A673 (cell line): ENCODE measurements at regions of chr2 and their contacts with region 1.

Region 1: GRCh38 chr2:58448065-58448507 is 207.0 kb upstream of the FANCL start:
- DNase-seq: peak; percentile 87
- H3K4me3 ChIP-seq: no peak overlapping the region
- H3K27ac ChIP-seq: no peak overlapping the region
- H3K4me1 ChIP-seq: no peaks in the 10 kb centered on the region
- H3K27me3 ChIP-seq: no peaks in the 10 kb centered on the region
- CTCF ChIP-seq: peak; percentile 77

Region 2: GRCh38 chr2:57720728-57721627 is 727.1 kb before region 1 on chr2:
- CTCF ChIA-PET with region 1: no interaction called
- POLR2A ChIA-PET with region 1: no interaction called
- intact Hi-C with region 1: loop called (anchors 5 kb)
- DNase-seq: peak; percentile 80
- H3K4me3 ChIP-seq: peak overlapping the region; percentile 21
- H3K27ac ChIP-seq: no peak overlapping the region
- H3K4me1 ChIP-seq: no peaks in the 10 kb centered on the region
- H3K27me3 ChIP-seq: no peaks in the 10 kb centered on the region
- CTCF ChIP-seq: peak; percentile 86

Region 3: GRCh38 chr2:57759822-57760300 is 688.2 kb before region 1 on chr2:
- CTCF ChIA-PET with region 1: interaction called, 11 read pairs
- POLR2A ChIA-PET with region 1: no interaction called
- intact Hi-C with region 1: loop called (anchors 1 kb)
- DNase-seq: peak; percentile 85
- H3K4me3 ChIP-seq: peak overlapping the region; percentile 27
- H3K27ac ChIP-seq: no peak overlapping the region
- H3K4me1 ChIP-seq: peaks cover 13% of the 10 kb centered on the region
- H3K27me3 ChIP-seq: no peaks in the 10 kb centered on the region
- CTCF ChIP-seq: peak; percentile 94

Region 4: GRCh38 chr2:57906152-57906732 is 541.8 kb before region 1 on chr2:
- CTCF ChIA-PET with region 1: interaction called, 10 read pairs
- POLR2A ChIA-PET with region 1: no interaction called
- intact Hi-C with region 1: loop called (anchors 1 kb)
- DNase-seq: peak; percentile 68
- H3K4me3 ChIP-seq: no peak overlapping the region
- H3K27ac ChIP-seq: no peak overlapping the region
- H3K4me1 ChIP-seq: no peaks in the 10 kb centered on the region
- H3K27me3 ChIP-seq: no peaks in the 10 kb centered on the region
- CTCF ChIP-seq: peak; percentile 80

Region 5: DNA sequence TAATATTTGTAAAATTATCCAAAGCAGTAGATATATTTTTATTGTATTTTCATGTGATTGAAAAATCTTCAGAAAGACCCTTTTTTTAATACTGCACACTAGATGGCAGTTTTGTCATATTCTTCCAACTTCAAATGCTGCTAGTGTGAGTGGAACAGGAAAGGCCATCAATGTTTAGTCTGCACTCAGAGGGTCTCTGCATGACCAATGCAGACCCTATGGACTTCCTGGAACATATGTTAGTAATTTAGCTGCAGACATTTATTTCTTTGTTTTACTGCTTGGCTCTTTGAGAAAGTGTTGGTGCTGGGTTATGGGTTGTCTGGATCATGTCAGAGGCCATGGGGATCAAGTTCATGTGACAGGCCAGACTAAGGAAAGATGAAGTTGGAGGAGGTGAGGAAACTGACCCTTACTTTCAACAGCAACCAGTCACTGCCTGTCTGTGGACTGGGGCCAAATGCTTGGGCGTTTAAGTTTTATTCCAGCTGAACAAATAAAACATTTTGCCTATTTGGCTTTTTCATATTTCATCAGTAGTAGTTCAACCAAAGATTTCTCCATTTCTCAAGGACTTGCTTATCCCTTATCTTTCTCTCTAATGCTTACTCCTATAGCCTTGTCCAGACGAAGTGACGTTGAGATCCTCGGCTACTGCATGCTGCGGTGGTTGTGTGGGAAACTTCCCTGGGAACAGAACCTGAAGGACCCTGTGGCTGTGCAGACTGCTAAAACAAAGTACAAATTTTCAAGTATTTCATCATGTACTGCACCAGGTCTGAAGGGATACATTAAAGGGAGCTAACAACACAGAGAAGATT is 316.7 kb before region 1 on chr2:
- CTCF ChIA-PET with region 1: no interaction called
- POLR2A ChIA-PET with region 1: no interaction called
- intact Hi-C with region 1: loop called (anchors 5 kb)
- DNase-seq: peak; percentile 23
- H3K4me3 ChIP-seq: no peak overlapping the region
- H3K27ac ChIP-seq: no peak overlapping the region
- H3K4me1 ChIP-seq: no peaks in the 10 kb centered on the region
- H3K27me3 ChIP-seq: no peaks in the 10 kb centered on the region
- CTCF ChIP-seq: peak; percentile 52

Region 6: GRCh38 chr2:58571181-58571852 is 123.2 kb after region 1 on chr2:
- CTCF ChIA-PET with region 1: no interaction called
- POLR2A ChIA-PET with region 1: no interaction called
- intact Hi-C with region 1: loop called (anchors 5 kb)
- DNase-seq: peak; percentile 78
- H3K4me3 ChIP-seq: no peak overlapping the region
- H3K27ac ChIP-seq: no peak overlapping the region
- H3K4me1 ChIP-seq: peaks cover 7% of the 10 kb centered on the region
- H3K27me3 ChIP-seq: no peaks in the 10 kb centered on the region
- CTCF ChIP-seq: peak; percentile 76

Region 7: DNA sequence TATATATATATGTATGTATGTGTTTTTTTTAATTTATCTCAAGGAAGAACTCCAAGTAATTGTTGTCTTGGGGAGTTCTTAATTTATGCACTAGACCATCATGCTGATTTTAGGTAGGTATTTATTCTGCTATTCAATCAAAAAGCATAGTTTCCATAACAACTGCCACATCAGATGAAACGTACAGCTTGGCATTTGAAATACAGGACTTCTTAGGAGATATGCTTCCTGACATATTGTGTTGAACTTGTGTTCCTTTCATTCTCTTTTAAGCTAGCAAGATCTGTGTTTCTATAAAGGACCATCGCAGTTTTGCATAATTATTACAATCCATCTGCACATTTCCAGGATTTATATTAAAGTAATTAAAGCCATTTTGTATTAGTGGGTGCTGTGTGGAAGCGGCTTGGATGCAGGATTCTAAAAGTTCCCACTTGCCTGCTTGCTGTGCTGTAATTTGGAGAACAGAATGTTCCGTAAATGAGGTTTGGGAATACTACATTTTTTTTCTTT is 136.6 kb after region 1 on chr2:
- CTCF ChIA-PET with region 1: no interaction called
- POLR2A ChIA-PET with region 1: no interaction called
- intact Hi-C with region 1: no loop called
- DNase-seq: no peak
- H3K4me3 ChIP-seq: no peak overlapping the region
- H3K27ac ChIP-seq: no peak overlapping the region
- H3K4me1 ChIP-seq: no peaks in the 10 kb centered on the region
- H3K27me3 ChIP-seq: no peaks in the 10 kb centered on the region
- CTCF ChIP-seq: no peak

Region 8: GRCh38 chr2:58680755-58681310 is 232.7 kb after region 1 on chr2:
- CTCF ChIA-PET with region 1: interaction called, 6 read pairs
- POLR2A ChIA-PET with region 1: no interaction called
- intact Hi-C with region 1: loop called (anchors 5 kb)
- DNase-seq: peak; percentile 4
- H3K4me3 ChIP-seq: no peak overlapping the region
- H3K27ac ChIP-seq: no peak overlapping the region
- H3K4me1 ChIP-seq: no peaks in the 10 kb centered on the region
- H3K27me3 ChIP-seq: no peaks in the 10 kb centered on the region
- CTCF ChIP-seq: peak; percentile 35; the same call in 1 of the 2 replicates

Region 9: GRCh38 chr2:58826795-58827194 is 378.7 kb after region 1 on chr2:
- CTCF ChIA-PET with region 1: no interaction called
- POLR2A ChIA-PET with region 1: no interaction called
- intact Hi-C with region 1: no loop called
- DNase-seq: no peak
- H3K4me3 ChIP-seq: no peak overlapping the region
- H3K27ac ChIP-seq: no peak overlapping the region
- H3K4me1 ChIP-seq: no peaks in the 10 kb centered on the region
- H3K27me3 ChIP-seq: no peaks in the 10 kb centered on the region
- CTCF ChIP-seq: no peak